Posterior cingulate gyrus (tissue), 11 donors: ENCODE measurements at regions of chr16 and their contacts with region 1.

Region 1: GRCh38 chr16:78094176-78094575 is 5.3 kb upstream of the WWOX start:
- DNase-seq: no peak

Region 2: GRCh38 chr16:76511203-76511602 is 1583.0 kb before region 1 on chr16:
- intact Hi-C with region 1: no loop called
- DNase-seq: no peak

Region 3: GRCh38 chr16:77675464-77676324 is 418.5 kb before region 1 on chr16:
- intact Hi-C with region 1: loop called (anchors 5 kb)
- DNase-seq: peak in 6 of 10 donors; percentile 54 to 74 (median 62)

Region 4: GRCh38 chr16:78045865-78046581 is 48.2 kb before region 1 on chr16:
- intact Hi-C with region 1: no loop called
- DNase-seq: peak in 9 of 10 donors; percentile 35 to 93 (median 60)

Region 5: DNA sequence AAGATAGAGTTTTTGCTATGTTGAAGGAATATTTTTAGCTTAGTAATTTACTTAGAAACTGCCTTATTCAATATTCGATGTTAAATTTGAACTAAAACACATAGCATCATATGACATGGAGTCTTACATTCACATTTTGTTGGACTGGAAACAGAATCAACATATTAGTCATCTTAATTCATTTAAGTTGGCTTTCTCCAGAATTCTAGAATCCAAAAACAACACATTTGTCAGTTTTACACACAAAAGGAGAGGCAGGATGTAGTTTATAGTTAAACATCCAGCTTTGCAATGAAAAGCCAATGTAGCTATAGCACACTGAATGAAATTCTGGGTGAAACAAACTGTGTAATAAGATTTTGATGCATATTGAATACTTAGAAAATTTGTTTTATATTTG is 48.6 kb after region 1 on chr16:
- intact Hi-C with region 1: no loop called
- DNase-seq: no peak

Region 6: DNA sequence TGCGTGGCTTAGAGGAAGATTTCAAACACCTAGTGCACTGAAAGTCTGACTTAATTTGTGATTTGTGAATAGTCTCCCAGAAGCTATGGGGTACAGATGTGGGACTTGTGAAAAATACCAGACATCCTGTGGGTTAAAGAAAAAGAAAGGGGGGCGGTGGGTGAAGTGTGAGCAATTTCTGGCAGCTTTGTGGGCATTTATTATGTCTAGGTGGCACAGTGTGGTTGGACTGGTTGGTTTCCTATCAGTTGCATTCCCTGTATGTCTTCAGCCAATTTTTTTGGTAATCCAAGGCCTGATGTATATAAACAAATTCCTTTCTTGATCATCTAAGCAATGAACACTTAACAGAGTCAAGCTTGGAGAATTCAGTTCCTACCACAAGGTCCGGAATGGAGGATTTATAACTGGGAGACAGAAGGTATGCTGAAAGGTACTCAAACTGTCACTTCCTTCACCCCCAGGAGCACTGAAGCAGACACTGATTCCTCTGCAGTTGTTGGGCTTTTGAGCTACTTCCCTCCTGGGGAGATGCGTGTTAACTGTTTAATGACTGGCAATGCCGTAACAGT is 216.9 kb after region 1 on chr16:
- intact Hi-C with region 1: no loop called
- DNase-seq: no peak